Activated naive CD4-positive, alpha-beta T cell treated with anti-CD3 and anti-CD28 coated beads for 36 hours (primary cell): ENCODE measurements at regions of chr5 and their contacts with region 1.

Region 1: DNA sequence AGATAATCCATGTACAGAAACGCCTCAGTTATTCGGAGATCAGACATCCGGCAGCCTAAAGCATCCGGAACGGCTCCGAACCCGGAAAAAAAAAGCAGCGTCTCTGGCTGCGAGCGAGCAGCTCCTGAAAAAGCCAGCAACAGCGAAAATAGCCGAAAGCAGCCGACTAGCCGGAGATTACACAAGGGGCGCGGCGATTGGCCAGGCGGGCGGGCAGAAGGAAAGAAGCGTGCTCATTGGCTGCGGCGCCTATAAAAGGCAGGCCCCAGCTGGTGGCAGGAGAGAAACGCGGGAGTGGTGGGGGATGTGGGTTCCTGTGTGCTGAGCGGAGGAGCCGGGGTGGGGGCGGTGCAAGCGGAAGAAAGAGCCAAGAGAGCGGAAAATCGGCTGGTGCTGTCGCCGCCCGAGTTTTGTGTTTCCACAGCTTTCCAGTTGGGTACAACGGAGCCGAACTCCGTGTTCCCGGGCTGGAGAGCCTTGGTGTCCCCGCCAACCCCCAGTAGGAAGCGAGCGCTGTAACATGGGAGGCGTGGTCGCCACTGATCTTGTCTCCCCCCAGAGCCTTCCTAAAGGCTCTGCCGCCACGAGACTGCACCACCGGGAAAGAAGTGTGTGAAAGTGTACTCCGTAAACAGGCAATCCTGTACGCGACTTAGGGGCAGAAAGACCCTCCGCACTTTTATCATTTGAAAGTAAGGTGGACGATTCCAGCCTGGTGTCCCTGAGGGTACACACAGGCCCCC is at the start of gene ARL15:
- DNase-seq: peak; percentile 98
- H3K4me3 Mint-ChIP-seq: peak within 1 kb of the TSS; percentile 89
- H3K27ac Mint-ChIP-seq: peak within 1 kb of the TSS; percentile 84
- H3K4me1 Mint-ChIP-seq: peaks cover 24% of the 10 kb centered on the region
- H3K27me3 Mint-ChIP-seq: no peaks in the 10 kb centered on the region
- total RNA-seq, gene ARL15: 6.7 to 7.0 TPM

Region 2: DNA sequence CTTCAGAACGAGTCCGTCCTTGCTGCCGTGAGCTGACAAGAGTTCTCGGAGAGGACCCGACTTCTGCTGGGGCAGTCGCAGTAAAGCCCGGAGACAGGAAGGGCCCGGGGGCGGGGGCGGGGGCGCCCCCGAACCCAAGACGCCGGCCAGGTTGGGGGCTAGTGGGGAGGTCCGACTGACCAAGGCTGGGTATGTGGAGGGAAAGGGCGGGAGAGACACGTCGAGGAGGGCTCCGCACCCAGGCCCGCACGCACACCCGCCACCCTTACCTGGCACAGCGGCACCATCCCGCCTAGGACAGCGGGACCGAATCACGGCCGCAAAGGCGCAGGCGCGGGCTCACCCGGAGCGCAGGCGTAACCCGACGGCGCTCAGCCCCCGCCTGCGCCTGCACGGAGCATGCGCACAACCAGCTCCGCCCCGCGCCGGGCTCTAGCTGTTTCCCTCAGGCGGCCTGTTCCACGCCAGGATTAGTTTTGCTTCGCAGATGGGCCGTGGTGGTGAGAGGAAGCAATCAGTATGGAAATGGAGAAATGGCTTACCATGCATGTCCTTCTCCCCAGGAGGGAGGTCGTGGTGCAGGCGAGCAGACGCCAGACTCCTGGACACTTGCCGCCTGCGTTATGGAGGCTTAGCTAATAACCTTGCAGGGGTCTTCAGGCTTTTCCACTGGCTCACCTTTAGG is 1201.0 kb before region 1 on chr5 and contains the start of gene MOCS2:
- CTCF ChIA-PET with region 1: no interaction called
- intact Hi-C with region 1: loop called (anchors 1 kb)
- DNase-seq: peak; percentile 91
- H3K4me3 Mint-ChIP-seq: peak within 1 kb of the TSS; percentile 92
- H3K27ac Mint-ChIP-seq: peak within 1 kb of the TSS; percentile 86
- H3K4me1 Mint-ChIP-seq: peaks cover 37% of the 10 kb centered on the region
- H3K27me3 Mint-ChIP-seq: no peaks in the 10 kb centered on the region
- total RNA-seq, gene MOCS2: 29.4 to 30.9 TPM

Region 3: GRCh38 chr5:53991942-53992341 is 318.7 kb before region 1 on chr5:
- CTCF ChIA-PET with region 1: no interaction called
- intact Hi-C with region 1: loop called (anchors 5 kb)
- DNase-seq: no peak
- H3K4me3 Mint-ChIP-seq: no peak overlapping the region
- H3K27ac Mint-ChIP-seq: no peak overlapping the region
- H3K4me1 Mint-ChIP-seq: peaks cover 4% of the 10 kb centered on the region
- H3K27me3 Mint-ChIP-seq: no peaks in the 10 kb centered on the region

Region 4: DNA sequence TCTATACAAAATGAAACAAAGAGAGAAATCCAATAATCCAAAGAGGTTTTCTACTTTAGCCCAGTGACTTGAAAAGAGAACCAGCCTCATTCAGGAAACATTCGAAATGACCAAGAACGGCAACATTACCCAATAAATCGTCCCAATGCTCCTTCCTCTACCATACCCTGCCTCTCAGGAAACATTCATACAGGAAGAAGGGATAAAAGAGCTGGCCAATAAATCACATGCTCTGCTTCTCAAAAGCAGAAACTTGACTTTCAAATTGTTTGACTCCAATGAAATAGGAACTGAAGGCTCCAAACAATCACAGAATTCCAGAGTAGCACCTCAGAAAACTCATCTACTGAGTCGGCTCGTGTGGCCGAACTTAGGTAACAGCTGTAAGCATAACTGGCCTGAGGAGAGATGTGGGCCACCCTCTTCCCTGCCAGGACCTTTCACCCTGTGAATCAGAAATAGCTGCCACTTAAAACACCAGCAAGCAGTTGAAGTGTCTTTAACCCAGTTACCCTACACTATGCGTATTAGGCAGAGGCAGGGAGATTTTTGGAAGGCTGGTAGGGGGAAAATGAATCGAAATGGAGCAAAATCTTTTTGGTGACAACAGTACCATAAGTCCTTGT is 14.8 kb before region 1 on chr5:
- CTCF ChIA-PET with region 1: no interaction called
- intact Hi-C with region 1: no loop called
- DNase-seq: no peak
- H3K4me3 Mint-ChIP-seq: no peak overlapping the region
- H3K27ac Mint-ChIP-seq: no peak overlapping the region
- H3K4me1 Mint-ChIP-seq: peaks cover 22% of the 10 kb centered on the region
- H3K27me3 Mint-ChIP-seq: no peaks in the 10 kb centered on the region

Region 5: GRCh38 chr5:54415896-54416601 is 105.4 kb after region 1 on chr5:
- CTCF ChIA-PET with region 1: interaction called, 3 read pairs
- intact Hi-C with region 1: loop called (anchors 1 kb)
- DNase-seq: peak; percentile 8
- H3K4me3 Mint-ChIP-seq: no peak overlapping the region
- H3K27ac Mint-ChIP-seq: no peak overlapping the region
- H3K4me1 Mint-ChIP-seq: no peaks in the 10 kb centered on the region
- H3K27me3 Mint-ChIP-seq: peaks cover 2% of the 10 kb centered on the region

Region 6: GRCh38 chr5:54517174-54518092 is 206.8 kb after region 1 on chr5 and contains the start of gene SNX18:
- CTCF ChIA-PET with region 1: no interaction called
- intact Hi-C with region 1: loop called (anchors 1 kb)
- DNase-seq: peak; percentile 91
- H3K4me3 Mint-ChIP-seq: peak within 1 kb of the TSS; percentile 56
- H3K27ac Mint-ChIP-seq: no peak within 1 kb of the TSS
- H3K4me1 Mint-ChIP-seq: peaks cover 38% of the 10 kb centered on the region
- H3K27me3 Mint-ChIP-seq: no peaks in the 10 kb centered on the region
- total RNA-seq, gene SNX18: 3.9 to 4.4 TPM

Region 7: GRCh38 chr5:54867310-54867944 is 556.8 kb after region 1 on chr5:
- CTCF ChIA-PET with region 1: no interaction called
- intact Hi-C with region 1: loop called (anchors 2 kb)
- DNase-seq: no peak
- H3K4me3 Mint-ChIP-seq: no peak overlapping the region
- H3K27ac Mint-ChIP-seq: no peak overlapping the region
- H3K4me1 Mint-ChIP-seq: peaks cover 16% of the 10 kb centered on the region
- H3K27me3 Mint-ChIP-seq: peaks cover 11% of the 10 kb centered on the region